MCF 10A (cell line): ENCODE measurements at regions of chr13 and their contacts with region 1.

Region 1: GRCh38 chr13:95834134-95834765 is 157.3 kb downstream of the DNAJC3 start:
- DNase-seq: peak; percentile 93
- H3K4me3 Mint-ChIP-seq: no peak overlapping the region
- H3K27ac Mint-ChIP-seq: peak overlapping the region; percentile 42
- H3K4me1 Mint-ChIP-seq: peaks cover 19% of the 10 kb centered on the region
- H3K27me3 Mint-ChIP-seq: no peaks in the 10 kb centered on the region
- CTCF ChIP-seq: peak; percentile 97

Region 2: DNA sequence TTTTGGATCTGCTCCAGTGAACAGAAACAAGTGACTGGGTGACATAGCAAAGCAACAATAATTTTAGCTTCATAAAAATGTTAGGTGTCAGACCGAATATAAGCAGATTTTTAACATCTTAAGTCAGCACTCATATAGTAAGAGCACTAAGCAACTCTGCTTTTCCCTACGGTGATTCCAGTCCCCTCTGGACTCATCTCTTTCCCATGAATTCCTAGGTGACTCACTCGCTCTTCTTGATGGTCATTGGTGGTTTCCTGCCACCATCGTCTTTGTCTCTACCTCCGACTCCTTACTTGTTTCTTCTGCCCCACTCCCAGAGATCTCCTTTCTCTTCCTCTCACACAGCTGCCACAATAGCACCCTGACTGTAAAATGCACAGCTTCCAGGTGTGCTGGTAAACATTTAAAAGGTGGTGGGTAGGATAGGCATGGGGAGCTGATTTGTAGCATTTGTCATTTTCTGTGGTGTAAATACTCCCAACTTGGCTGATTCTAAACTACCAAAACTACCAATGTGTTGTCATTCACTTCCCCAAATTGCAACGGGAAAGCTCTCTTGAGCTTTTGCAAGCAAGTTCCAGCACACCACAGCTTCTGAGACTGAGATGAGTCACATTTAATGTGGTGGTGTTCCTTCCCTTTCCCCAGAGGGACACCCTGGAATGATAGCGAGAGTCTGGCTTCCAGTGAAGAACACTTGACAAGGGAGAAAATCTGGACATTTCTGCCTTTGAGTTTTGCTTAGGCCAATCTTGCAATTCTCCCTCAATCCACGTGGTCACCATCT is 324.5 kb before region 1 on chr13:
- CTCF ChIA-PET with region 1: interaction called, 13 read pairs
- POLR2A ChIA-PET with region 1: no interaction called
- intact Hi-C with region 1: no loop called
- DNase-seq: peak; percentile 94
- H3K4me3 Mint-ChIP-seq: no peak overlapping the region
- H3K27ac Mint-ChIP-seq: no peak overlapping the region
- H3K4me1 Mint-ChIP-seq: no peaks in the 10 kb centered on the region
- H3K27me3 Mint-ChIP-seq: no peaks in the 10 kb centered on the region
- CTCF ChIP-seq: no peak

Region 3: DNA sequence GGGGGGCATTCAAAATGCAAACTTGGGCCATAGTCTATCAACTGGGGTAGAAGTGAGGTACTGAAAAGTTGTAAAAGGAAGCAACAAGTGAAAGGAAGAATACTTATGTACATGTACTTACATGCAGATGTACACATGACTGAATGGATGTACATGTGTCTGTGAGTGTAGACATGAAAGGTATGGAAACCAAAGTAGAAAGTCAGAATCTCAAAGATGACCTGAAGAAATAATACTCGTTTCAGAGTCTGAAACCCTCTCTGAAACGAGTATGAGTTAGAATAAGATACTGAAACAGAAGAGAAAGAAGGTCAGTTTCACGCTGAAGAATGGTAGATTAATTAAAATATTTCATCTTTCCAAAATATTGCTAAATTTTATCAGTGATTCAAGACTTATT is 203.7 kb before region 1 on chr13:
- CTCF ChIA-PET with region 1: interaction called, 265 read pairs
- POLR2A ChIA-PET with region 1: interaction called, 17 read pairs
- intact Hi-C with region 1: no loop called
- DNase-seq: no peak
- H3K4me3 Mint-ChIP-seq: no peak overlapping the region
- H3K27ac Mint-ChIP-seq: no peak overlapping the region
- H3K4me1 Mint-ChIP-seq: no peaks in the 10 kb centered on the region
- H3K27me3 Mint-ChIP-seq: no peaks in the 10 kb centered on the region
- CTCF ChIP-seq: no peak

Region 4: GRCh38 chr13:95676762-95677563 is 157.3 kb before region 1 on chr13 and contains the start of gene DNAJC3:
- CTCF ChIA-PET with region 1: interaction called, 7 read pairs
- POLR2A ChIA-PET with region 1: interaction called, 19 read pairs
- intact Hi-C with region 1: loop called (anchors 5 kb)
- DNase-seq: peak; percentile 99
- H3K4me3 Mint-ChIP-seq: peak within 1 kb of the TSS; percentile 90
- H3K27ac Mint-ChIP-seq: peak within 1 kb of the TSS; percentile 94
- H3K4me1 Mint-ChIP-seq: peaks cover 52% of the 10 kb centered on the region
- H3K27me3 Mint-ChIP-seq: no peaks in the 10 kb centered on the region
- CTCF ChIP-seq: no peak
- total RNA-seq, gene DNAJC3: 113 and 132 TPM in 2 replicates

Region 5: GRCh38 chr13:95784161-95784899 is 49.9 kb before region 1 on chr13:
- CTCF ChIA-PET with region 1: interaction called, 22 read pairs
- POLR2A ChIA-PET with region 1: interaction called, 9 read pairs
- intact Hi-C with region 1: no loop called
- DNase-seq: peak; percentile 85
- H3K4me3 Mint-ChIP-seq: peak overlapping the region; percentile 16
- H3K27ac Mint-ChIP-seq: peak overlapping the region; percentile 94
- H3K4me1 Mint-ChIP-seq: peaks cover 20% of the 10 kb centered on the region
- H3K27me3 Mint-ChIP-seq: no peaks in the 10 kb centered on the region
- CTCF ChIP-seq: no peak

Region 6: GRCh38 chr13:95858286-95859075 is 24.2 kb after region 1 on chr13:
- CTCF ChIA-PET with region 1: interaction called, 16 read pairs
- POLR2A ChIA-PET with region 1: no interaction called
- intact Hi-C with region 1: no loop called
- DNase-seq: peak; percentile 49
- H3K4me3 Mint-ChIP-seq: no peak overlapping the region
- H3K27ac Mint-ChIP-seq: no peak overlapping the region
- H3K4me1 Mint-ChIP-seq: peaks cover 5% of the 10 kb centered on the region
- H3K27me3 Mint-ChIP-seq: no peaks in the 10 kb centered on the region
- CTCF ChIP-seq: no peak

Region 7: DNA sequence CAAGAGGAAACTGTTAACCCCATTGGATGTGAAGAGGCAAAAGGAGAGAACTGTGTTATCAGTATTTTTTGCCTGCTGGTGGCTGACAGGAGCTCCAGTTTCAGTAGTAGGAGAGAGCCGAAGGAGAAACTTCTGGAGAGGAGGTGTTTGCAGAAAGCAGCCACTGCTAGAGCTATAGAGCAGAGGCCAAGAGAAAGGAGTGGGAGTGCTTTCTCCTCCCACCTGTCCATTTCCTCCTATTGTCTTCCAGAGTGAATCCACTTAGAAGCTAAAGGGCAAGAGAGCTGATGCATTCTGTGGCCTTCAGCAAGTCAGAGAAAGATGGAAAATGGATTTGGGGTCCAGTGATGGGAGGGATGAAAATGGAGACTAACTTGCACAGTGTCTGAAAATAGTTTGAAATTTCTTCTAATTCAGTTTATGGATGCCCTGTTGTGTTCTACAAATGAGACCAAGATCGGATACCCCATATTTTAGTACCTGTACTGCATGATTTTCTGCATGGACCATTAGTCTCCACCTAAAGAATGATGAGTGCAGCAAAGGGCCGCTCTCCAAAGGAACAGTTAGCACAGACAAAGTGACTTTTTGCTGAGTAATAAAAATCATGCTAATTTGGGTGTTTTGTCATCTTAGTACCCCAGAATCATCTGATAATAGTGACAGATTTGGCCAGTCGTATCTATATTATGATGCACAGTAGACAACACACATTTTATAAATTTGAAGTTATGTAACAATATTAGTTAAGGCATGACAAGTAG is 266.4 kb after region 1 on chr13:
- CTCF ChIA-PET with region 1: no interaction called
- POLR2A ChIA-PET with region 1: no interaction called
- intact Hi-C with region 1: no loop called
- DNase-seq: no peak
- H3K4me3 Mint-ChIP-seq: no peak overlapping the region
- H3K27ac Mint-ChIP-seq: no peak overlapping the region
- H3K4me1 Mint-ChIP-seq: no peaks in the 10 kb centered on the region
- H3K27me3 Mint-ChIP-seq: peaks cover 8% of the 10 kb centered on the region
- CTCF ChIP-seq: no peak